GM12878 (cell line): ENCODE measurements at regions of chr12 and their contacts with region 1.

Region 1: DNA sequence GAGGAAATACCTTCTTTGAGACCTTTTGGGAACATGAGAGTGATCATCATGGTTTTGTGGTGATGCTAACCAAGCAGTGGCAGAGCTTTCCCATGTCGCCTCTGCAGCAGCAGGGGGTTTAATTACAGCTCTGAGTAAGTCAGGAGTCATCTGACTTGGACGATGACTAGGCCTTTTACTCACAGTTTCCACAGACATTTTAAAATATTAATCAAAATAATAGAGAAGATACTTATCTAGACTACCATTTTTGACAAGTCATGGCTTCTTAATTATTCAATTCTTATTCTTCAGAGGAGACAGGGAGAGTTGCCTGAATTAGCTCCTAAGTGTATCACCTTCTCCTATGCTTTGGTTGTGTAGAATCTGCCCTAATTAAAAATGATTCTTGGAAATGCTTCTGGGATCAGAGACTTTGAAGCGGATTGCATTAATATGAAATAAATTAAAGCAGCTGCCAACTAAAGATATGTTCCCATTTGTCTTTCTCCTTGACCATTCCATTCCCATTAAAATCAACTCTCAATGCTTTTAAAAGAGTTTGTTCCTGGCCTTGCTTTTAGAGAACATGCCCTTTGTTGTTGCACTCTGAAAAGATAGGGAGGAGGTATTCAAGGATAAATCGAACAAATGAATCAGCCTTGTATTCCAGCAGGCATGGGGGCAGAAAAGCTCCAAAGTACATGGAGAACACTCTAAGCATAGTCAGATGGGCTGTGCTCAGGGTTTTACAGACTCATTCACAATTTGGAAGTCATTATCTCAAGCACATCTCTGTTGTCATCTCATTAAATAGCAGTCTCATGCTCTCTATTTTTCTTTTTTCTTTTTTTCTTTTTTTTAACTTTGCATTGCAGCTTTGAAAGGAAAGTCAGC is 7.7 kb upstream of the IFNG-AS1 start:
- DNase-seq: no peak
- ATAC-seq: no peak; the same call in 2 of the 3 replicates
- H3K4me3 ChIP-seq: no peak overlapping the region
- H3K27ac ChIP-seq: no peak overlapping the region
- H3K4me1 ChIP-seq: no peaks in the 10 kb centered on the region
- H3K27me3 ChIP-seq: no peaks in the 10 kb centered on the region
- CTCF ChIP-seq: no peak
- EP300 ChIP-seq: no peak
- POLR2A ChIP-seq: no peak
- RAD21 ChIP-seq: no peak

Region 2: DNA sequence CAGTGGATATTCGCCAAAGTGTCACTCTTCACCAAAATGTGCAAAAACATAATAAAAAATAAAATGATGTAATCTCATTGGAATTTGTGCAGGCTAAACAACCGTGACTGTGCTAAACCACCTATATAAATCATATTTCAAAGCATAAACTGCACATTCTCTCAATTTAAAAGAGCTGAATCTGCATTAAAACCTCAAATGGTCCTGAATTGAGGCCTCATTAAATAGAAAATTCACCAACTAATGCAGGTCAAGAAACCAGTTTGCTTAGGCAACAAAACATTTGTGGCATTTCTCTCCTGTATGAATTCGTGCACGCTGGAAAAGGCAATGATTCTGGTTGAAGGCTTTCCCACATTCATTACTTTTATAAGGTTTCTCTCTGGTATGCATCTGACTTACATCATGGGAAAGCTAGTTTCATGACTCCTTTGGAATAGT is 72.4 kb before region 1 on chr12:
- CTCF ChIA-PET with region 1: no interaction called
- POLR2A ChIA-PET with region 1: no interaction called
- RAD21 ChIA-PET with region 1: no interaction called
- SMC1A ChIA-PET with region 1: no interaction called
- in situ Hi-C with region 1: no loop called
- intact Hi-C with region 1: no loop called
- DNase-seq: no peak
- ATAC-seq: no peak
- H3K4me3 ChIP-seq: no peak overlapping the region
- H3K27ac ChIP-seq: no peak overlapping the region
- H3K4me1 ChIP-seq: no peaks in the 10 kb centered on the region
- H3K27me3 ChIP-seq: no peaks in the 10 kb centered on the region
- CTCF ChIP-seq: no peak
- EP300 ChIP-seq: no peak
- POLR2A ChIP-seq: no peak
- RAD21 ChIP-seq: no peak

Region 3: GRCh38 chr12:67957383-67957782 is 24.1 kb before region 1 on chr12:
- CTCF ChIA-PET with region 1: no interaction called
- POLR2A ChIA-PET with region 1: interaction called, 3 read pairs
- RAD21 ChIA-PET with region 1: interaction called, 3 read pairs
- SMC1A ChIA-PET with region 1: interaction called, 12 read pairs
- in situ Hi-C with region 1: no loop called
- intact Hi-C with region 1: no loop called
- DNase-seq: no peak
- ATAC-seq: no peak
- H3K4me3 ChIP-seq: no peak overlapping the region
- H3K27ac ChIP-seq: no peak overlapping the region
- H3K4me1 ChIP-seq: no peaks in the 10 kb centered on the region
- H3K27me3 ChIP-seq: no peaks in the 10 kb centered on the region
- CTCF ChIP-seq: no peak
- EP300 ChIP-seq: no peak
- POLR2A ChIP-seq: no peak
- RAD21 ChIP-seq: no peak

Region 4: DNA sequence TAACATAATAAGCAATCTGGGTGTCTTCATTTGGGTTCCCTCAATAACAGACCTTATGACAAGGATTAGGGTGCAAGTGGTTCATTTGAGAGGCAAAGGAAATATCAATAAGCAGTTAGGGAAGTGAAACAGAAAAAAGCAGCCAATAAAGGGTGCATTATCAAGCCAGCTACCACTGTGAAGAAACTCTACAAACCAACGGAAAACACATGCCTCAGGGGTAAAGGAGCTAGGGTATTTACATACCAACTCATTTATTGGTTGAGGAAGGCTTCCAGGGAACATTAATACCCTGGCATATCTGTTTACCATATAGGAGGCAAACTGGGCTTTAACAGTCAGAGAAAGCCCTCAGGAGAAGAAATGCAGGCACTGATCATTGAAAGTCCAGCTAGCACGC is 15.0 kb before region 1 on chr12:
- CTCF ChIA-PET with region 1: interaction called, 10 read pairs
- POLR2A ChIA-PET with region 1: interaction called, 7 read pairs
- RAD21 ChIA-PET with region 1: interaction called, 7 read pairs
- SMC1A ChIA-PET with region 1: interaction called, 13 read pairs
- in situ Hi-C with region 1: no loop called
- intact Hi-C with region 1: no loop called
- DNase-seq: no peak
- ATAC-seq: peak; percentile 68
- H3K4me3 ChIP-seq: no peak overlapping the region
- H3K27ac ChIP-seq: no peak overlapping the region
- H3K4me1 ChIP-seq: peaks cover 8% of the 10 kb centered on the region; the same call in 1 of the 2 replicates
- H3K27me3 ChIP-seq: peaks cover 0 to 2% of the 10 kb centered on the region in 2 experiments; a peak in 2 of 4 replicates
- CTCF ChIP-seq: no peak
- EP300 ChIP-seq: no peak
- POLR2A ChIP-seq: no peak
- RAD21 ChIP-seq: no peak

Region 5: DNA sequence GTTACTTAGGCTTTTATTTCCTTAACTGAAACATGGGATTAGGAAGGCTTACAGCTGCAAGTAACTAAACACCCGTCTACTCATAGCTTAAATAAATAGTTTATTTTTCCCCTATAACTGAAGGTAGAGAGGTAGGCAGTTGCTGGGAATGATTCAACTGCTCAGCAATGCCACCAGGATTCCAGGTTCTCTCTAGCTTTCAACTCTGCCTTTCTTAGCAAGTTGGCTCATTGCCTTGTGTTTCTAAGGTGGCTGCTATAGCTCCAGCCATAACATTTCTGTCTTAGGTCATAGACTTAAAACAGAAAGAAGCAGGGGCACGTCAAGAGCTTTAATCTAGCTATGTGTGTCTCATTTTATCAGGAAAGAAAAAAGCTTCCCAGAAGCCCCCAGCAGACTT is 454.3 kb after region 1 on chr12:
- CTCF ChIA-PET with region 1: no interaction called
- POLR2A ChIA-PET with region 1: no interaction called
- RAD21 ChIA-PET with region 1: no interaction called
- SMC1A ChIA-PET with region 1: no interaction called
- in situ Hi-C with region 1: no loop called
- intact Hi-C with region 1: no loop called
- DNase-seq: no peak
- ATAC-seq: no peak
- H3K4me3 ChIP-seq: no peak overlapping the region
- H3K27ac ChIP-seq: no peak overlapping the region
- H3K4me1 ChIP-seq: no peaks in the 10 kb centered on the region
- H3K27me3 ChIP-seq: no peaks in the 10 kb centered on the region
- CTCF ChIP-seq: no peak
- EP300 ChIP-seq: no peak
- POLR2A ChIP-seq: no peak
- RAD21 ChIP-seq: no peak